ENCODE measurements at regions of chr12 and their contacts with region 1.

Region 1: DNA sequence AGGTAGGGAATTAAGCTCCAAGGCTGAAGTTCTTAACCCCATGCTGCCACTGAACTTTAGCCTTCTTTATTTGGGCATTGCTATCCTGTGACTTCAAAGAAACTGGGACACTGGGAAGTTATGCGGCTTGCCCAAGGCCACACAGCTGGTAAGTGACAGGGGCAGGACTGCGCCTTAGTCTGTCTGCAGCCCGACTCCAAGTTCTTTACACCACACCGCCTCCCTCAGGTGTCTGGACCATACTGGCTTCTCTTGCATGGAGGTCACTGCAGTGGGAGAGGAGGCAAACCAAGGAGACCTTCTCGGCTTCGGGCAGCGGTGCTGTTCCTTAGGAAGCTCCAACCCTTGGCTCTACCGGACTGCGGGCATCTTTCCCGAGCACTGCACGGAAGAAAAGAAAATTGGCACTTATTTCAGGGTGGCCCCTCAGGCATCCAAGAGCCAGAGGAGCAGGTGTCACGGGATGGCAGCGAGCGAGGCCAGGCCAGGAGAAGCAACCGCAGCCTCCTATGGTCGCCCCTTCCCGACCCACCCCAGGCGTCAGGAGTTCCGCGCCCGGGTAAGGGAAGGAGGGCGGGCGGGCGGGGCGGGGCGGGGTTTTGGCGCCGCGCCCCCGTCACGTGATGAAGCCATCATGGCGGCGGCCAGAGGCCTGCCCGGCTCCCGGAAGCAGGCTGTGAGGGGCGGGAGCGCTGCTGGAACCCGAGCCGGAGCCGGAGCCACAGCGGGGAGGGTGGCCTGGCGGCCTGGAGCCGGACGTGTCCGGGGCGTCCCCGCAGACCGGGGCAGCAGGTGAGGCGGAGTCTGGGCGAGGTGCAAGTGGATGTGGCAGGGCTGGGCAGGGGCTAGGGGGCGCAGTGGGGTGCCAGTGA is 16.4 kb upstream of the ESPL1 start:
- DNase-seq: peak; percentile 84
- H3K4me3 ChIP-seq: peak overlapping the region; percentile 91
- H3K27ac ChIP-seq: peak overlapping the region; percentile 48
- H3K4me1 ChIP-seq: peaks cover 32% of the 10 kb centered on the region
- CTCF ChIP-seq: peak; percentile 66

Region 2: GRCh38 chr12:53213348-53213747 is 38.4 kb before region 1 on chr12:
- CTCF ChIA-PET with region 1: interaction called, 5 read pairs
- POLR2A ChIA-PET with region 1: interaction called, 3 read pairs
- intact Hi-C with region 1: loop called (anchors 2 kb)
- DNase-seq: peak; percentile 86
- H3K4me3 ChIP-seq: no peak overlapping the region
- H3K27ac ChIP-seq: no peak overlapping the region
- H3K4me1 ChIP-seq: peaks cover 87% of the 10 kb centered on the region
- CTCF ChIP-seq: peak; percentile 94

Region 3: GRCh38 chr12:53220801-53221202 is 30.9 kb before region 1 on chr12:
- CTCF ChIA-PET with region 1: no interaction called
- POLR2A ChIA-PET with region 1: interaction called, 3 read pairs
- intact Hi-C with region 1: loop called (anchors 2 kb)
- DNase-seq: peak; percentile 90
- H3K4me3 ChIP-seq: peak overlapping the region; percentile 74
- H3K27ac ChIP-seq: peak overlapping the region; percentile 90
- H3K4me1 ChIP-seq: peaks cover 72% of the 10 kb centered on the region
- CTCF ChIP-seq: no peak

Region 4: GRCh38 chr12:53295070-53295890 is 43.6 kb after region 1 on chr12 and contains the start of gene PFDN5:
- CTCF ChIA-PET with region 1: no interaction called
- POLR2A ChIA-PET with region 1: interaction called, 6 read pairs
- intact Hi-C with region 1: loop called (anchors 2 kb)
- DNase-seq: peak; percentile 91
- H3K4me3 ChIP-seq: peak within 1 kb of the TSS; percentile 92
- H3K27ac ChIP-seq: peak within 1 kb of the TSS; percentile 48
- H3K4me1 ChIP-seq: peaks cover 24% of the 10 kb centered on the region
- CTCF ChIP-seq: no peak
- total RNA-seq, gene PFDN5: 348 and 394 TPM in 2 replicates

Measured in OCI-LY7 (cell line).